A549 (cell line): ENCODE measurements at regions of chr1 and their contacts with region 1.

Region 1: GRCh38 chr1:233916706-233917105 is 12.2 kb downstream of the SLC35F3 start:
- DNase-seq: peak in 1 of 2 experiments; percentile 55
- ATAC-seq: peak; percentile 33 to 52; a peak in 3 of 6 replicates
- H3K4me3 ChIP-seq: no peak overlapping the region
- H3K27ac ChIP-seq: peak overlapping the region; percentile 49 to 77; a peak in 5 of 6 replicates
- H3K4me1 ChIP-seq: peaks cover 58% of the 10 kb centered on the region
- CTCF ChIP-seq: no peak
- EP300 ChIP-seq: peak in 1 of 2 experiments; percentile 31; a peak in 1 of 5 replicates
- POLR2A ChIP-seq: no peak
- RAD21 ChIP-seq: peak; percentile 41 to 49; a peak in 4 of 5 replicates

Region 2: GRCh38 chr1:233904633-233905415 is 11.9 kb before region 1 on chr1 and contains the start of gene SLC35F3:
- CTCF ChIA-PET with region 1: interaction called, 23 read pairs
- POLR2A ChIA-PET with region 1: interaction called, 4 read pairs
- DNase-seq: peak; percentile 76 to 84
- ATAC-seq: peak; percentile 87 to 88
- H3K4me3 ChIP-seq: peak within 1 kb of the TSS; percentile 89
- H3K27ac ChIP-seq: peak within 1 kb of the TSS; percentile 77 to 94
- H3K4me1 ChIP-seq: peaks cover 39% of the 10 kb centered on the region
- CTCF ChIP-seq: peak; percentile 88
- EP300 ChIP-seq: no peak; a peak in 1 of 5 replicates
- POLR2A ChIP-seq: peak; percentile 66
- RAD21 ChIP-seq: peak; percentile 56 to 88; a peak in 4 of 5 replicates
- polyA plus RNA-seq, gene SLC35F3: 7.1 and 7.8 TPM in 2 replicates